ENCODE measurements at regions of chr3 and their contacts with region 1.

Region 1: GRCh38 chr3:174440741-174441587 is 418.2 kb upstream of the NAALADL2 start:
- DNase-seq: peak; percentile 92
- ATAC-seq: peak; percentile 72
- H3K4me3 ChIP-seq: peak overlapping the region; percentile 73
- H3K27ac ChIP-seq: peak overlapping the region; percentile 96
- H3K4me1 ChIP-seq: peaks cover 8% of the 10 kb centered on the region
- H3K27me3 ChIP-seq: no peaks in the 10 kb centered on the region
- CTCF ChIP-seq: peak; percentile 21; the same call in 1 of the 2 replicates
- POLR2A ChIP-seq: peak; percentile 71; the same call in 1 of the 2 replicates
- RAD21 ChIP-seq: no peak; the same call in 1 of the 2 replicates

Region 2: GRCh38 chr3:174098671-174099070 is 342.3 kb before region 1 on chr3:
- CTCF ChIA-PET with region 1: no interaction called
- POLR2A ChIA-PET with region 1: no interaction called
- dilution Hi-C with region 1: no loop called
- in situ Hi-C with region 1: no loop called
- intact Hi-C with region 1: no loop called
- DNase-seq: peak; percentile 31
- ATAC-seq: no peak
- H3K4me3 ChIP-seq: no peak overlapping the region
- H3K27ac ChIP-seq: no peak overlapping the region
- H3K4me1 ChIP-seq: peaks cover 2% of the 10 kb centered on the region; the same call in 1 of the 2 replicates
- H3K27me3 ChIP-seq: no peaks in the 10 kb centered on the region
- CTCF ChIP-seq: no peak
- POLR2A ChIP-seq: no peak
- RAD21 ChIP-seq: no peak

Region 3: DNA sequence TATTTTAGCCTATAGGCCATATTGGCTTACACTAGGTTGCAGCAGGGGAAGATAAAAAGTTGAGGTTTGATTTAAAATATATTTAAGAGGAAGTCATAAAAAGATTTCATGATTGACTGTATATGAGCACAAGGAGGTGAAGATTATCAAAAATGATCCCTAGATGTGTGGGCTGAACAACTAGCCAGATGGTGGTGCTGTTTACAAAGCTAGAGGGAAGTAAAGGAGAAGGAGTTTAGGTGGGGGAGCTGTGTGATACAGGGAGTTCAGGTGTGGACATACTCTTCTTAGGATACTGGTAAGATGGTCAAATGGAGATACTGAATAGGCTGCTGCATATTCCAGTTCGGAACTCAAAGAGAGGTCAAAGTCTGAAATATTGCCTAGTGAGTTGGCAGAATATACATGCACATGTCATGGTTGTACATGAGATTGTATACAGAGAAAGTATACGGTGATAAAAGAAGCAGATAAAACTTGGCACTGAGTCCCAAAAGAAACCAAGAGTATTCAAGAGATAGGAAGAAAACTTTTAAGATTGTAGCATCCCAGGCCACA is 315.6 kb before region 1 on chr3:
- CTCF ChIA-PET with region 1: interaction called, 6 read pairs
- POLR2A ChIA-PET with region 1: no interaction called
- dilution Hi-C with region 1: no loop called
- in situ Hi-C with region 1: no loop called
- intact Hi-C with region 1: loop called (anchors 1 kb)
- DNase-seq: peak; percentile 65
- ATAC-seq: peak; percentile 87
- H3K4me3 ChIP-seq: no peak overlapping the region
- H3K27ac ChIP-seq: no peak overlapping the region
- H3K4me1 ChIP-seq: peaks cover 5% of the 10 kb centered on the region; the same call in 1 of the 2 replicates
- H3K27me3 ChIP-seq: no peaks in the 10 kb centered on the region
- CTCF ChIP-seq: peak; percentile 80
- POLR2A ChIP-seq: no peak
- RAD21 ChIP-seq: peak; percentile 91

Region 4: GRCh38 chr3:174784206-174784934 is 343.4 kb after region 1 on chr3:
- CTCF ChIA-PET with region 1: no interaction called
- POLR2A ChIA-PET with region 1: no interaction called
- dilution Hi-C with region 1: no loop called
- in situ Hi-C with region 1: no loop called
- intact Hi-C with region 1: loop called (anchors 10 kb)
- DNase-seq: peak; percentile 74
- ATAC-seq: peak; percentile 98
- H3K4me3 ChIP-seq: no peak overlapping the region
- H3K27ac ChIP-seq: no peak overlapping the region; the same call in 1 of the 2 replicates
- H3K4me1 ChIP-seq: no peaks in the 10 kb centered on the region
- H3K27me3 ChIP-seq: no peaks in the 10 kb centered on the region
- CTCF ChIP-seq: no peak
- POLR2A ChIP-seq: no peak
- RAD21 ChIP-seq: no peak

Region 5: GRCh38 chr3:174955513-174956001 is 514.6 kb after region 1 on chr3:
- CTCF ChIA-PET with region 1: no interaction called
- POLR2A ChIA-PET with region 1: no interaction called
- dilution Hi-C with region 1: no loop called
- in situ Hi-C with region 1: loop called (anchors 10 kb)
- intact Hi-C with region 1: no loop called
- DNase-seq: peak; percentile 48
- ATAC-seq: peak; percentile 25; the same call in 1 of the 2 replicates
- H3K4me3 ChIP-seq: no peak overlapping the region
- H3K27ac ChIP-seq: peak overlapping the region; percentile 29; the same call in 1 of the 2 replicates
- H3K4me1 ChIP-seq: peaks cover 19% of the 10 kb centered on the region
- H3K27me3 ChIP-seq: no peaks in the 10 kb centered on the region
- CTCF ChIP-seq: no peak
- POLR2A ChIP-seq: no peak
- RAD21 ChIP-seq: no peak

Region 6: DNA sequence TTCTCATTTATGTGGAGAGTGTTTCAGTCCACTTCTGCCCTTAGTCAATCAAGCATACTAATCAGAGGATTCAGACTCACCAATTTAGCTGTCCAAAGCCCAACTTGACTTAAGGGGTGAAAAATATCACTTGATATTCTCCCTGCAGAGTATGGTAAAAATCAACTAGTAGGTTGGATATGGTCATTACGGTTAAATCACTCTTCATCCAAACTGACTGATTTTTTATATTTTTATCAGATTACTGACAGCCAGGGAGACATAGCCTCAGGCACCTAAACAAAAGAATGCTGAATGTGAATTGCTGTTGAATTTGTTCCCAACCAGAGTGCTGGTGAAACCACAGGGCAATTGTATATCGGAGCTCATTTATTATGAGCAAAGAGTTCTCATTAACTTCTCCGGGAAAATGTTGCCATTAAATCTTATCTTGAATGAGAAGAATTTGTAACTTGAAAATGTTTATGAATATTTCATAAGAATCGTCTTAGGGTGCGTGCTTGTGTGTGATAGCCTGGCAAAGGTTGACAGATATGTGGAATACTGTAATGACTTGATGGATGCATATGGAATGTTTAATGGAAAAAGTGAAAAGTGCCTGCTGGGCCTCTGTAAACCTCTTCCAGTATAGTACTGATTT is 829.4 kb after region 1 on chr3:
- CTCF ChIA-PET with region 1: no interaction called
- POLR2A ChIA-PET with region 1: no interaction called
- dilution Hi-C with region 1: no loop called
- in situ Hi-C with region 1: no loop called
- intact Hi-C with region 1: loop called (anchors 5 kb)
- DNase-seq: peak; percentile 62
- ATAC-seq: peak; percentile 43
- H3K4me3 ChIP-seq: no peak overlapping the region
- H3K27ac ChIP-seq: peak overlapping the region; percentile 89; the same call in 1 of the 2 replicates
- H3K4me1 ChIP-seq: peaks cover 7% of the 10 kb centered on the region
- H3K27me3 ChIP-seq: no peaks in the 10 kb centered on the region
- CTCF ChIP-seq: no peak
- POLR2A ChIP-seq: no peak
- RAD21 ChIP-seq: no peak

Region 7: GRCh38 chr3:175432376-175433025 is 991.5 kb after region 1 on chr3:
- CTCF ChIA-PET with region 1: no interaction called
- POLR2A ChIA-PET with region 1: no interaction called
- dilution Hi-C with region 1: no loop called
- in situ Hi-C with region 1: no loop called
- intact Hi-C with region 1: loop called (anchors 5 kb)
- DNase-seq: peak; percentile 56
- ATAC-seq: no peak; the same call in 1 of the 2 replicates
- H3K4me3 ChIP-seq: peak overlapping the region; percentile 25; the same call in 1 of the 2 replicates
- H3K27ac ChIP-seq: peak overlapping the region; percentile 95
- H3K4me1 ChIP-seq: peaks cover 7% of the 10 kb centered on the region; the same call in 1 of the 2 replicates
- H3K27me3 ChIP-seq: no peaks in the 10 kb centered on the region
- CTCF ChIP-seq: no peak
- POLR2A ChIP-seq: no peak
- RAD21 ChIP-seq: no peak

Measured in IMR-90 (cell line).